HepG2 (cell line): ENCODE measurements at regions of chrX and their contacts with region 1.

Region 1: DNA sequence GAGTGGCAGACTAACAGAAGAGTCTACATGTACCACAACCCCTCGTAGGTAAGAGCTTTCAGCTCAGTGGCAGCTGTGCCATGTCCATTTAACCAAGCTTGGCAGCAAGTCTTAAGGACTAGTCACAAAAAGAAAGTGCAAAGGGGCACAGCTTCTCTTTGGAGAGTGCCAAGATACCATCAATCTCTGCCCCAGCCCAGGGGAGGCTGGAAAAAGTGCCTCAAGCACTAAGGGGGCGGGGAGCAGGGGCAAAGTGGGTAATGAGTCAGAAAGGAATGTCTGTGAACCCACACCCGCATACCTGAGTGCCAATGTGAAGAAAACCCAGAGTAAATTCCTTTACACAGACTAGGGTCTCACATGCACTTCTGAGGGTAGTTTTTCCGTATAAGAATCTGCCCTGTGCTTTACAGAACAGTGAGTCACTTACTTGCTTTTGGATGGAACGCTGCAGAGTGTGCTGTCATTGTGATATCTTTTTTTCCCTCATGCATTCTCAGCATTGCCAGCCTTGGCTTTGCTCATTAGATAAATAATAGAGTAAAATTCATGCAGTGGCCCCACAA is 219.8 kb downstream of the ZNF674 start:
- DNase-seq: peak; percentile 41
- ATAC-seq: no peak
- H3K4me3 ChIP-seq: peak overlapping the region in 1 of 3 experiments; percentile 68; a peak in 1 of 6 replicates
- H3K27ac ChIP-seq: peak overlapping the region; percentile 100
- H3K4me1 ChIP-seq: peaks cover 83% of the 10 kb centered on the region
- H3K27me3 ChIP-seq: no peaks in the 10 kb centered on the region
- CTCF ChIP-seq: no peak
- EP300 ChIP-seq: no peak
- POLR2A ChIP-seq: no peak
- RAD21 ChIP-seq: no peak

Region 2: GRCh38 chrX:46180258-46180687 is 145.1 kb before region 1 on chrX:
- CTCF ChIA-PET with region 1: no interaction called
- POLR2A ChIA-PET with region 1: no interaction called
- in situ Hi-C with region 1: no loop called
- intact Hi-C with region 1: loop called (anchors 10 kb)
- DNase-seq: peak; percentile 2
- ATAC-seq: no peak
- H3K4me3 ChIP-seq: no peak overlapping the region
- H3K27ac ChIP-seq: no peak overlapping the region
- H3K4me1 ChIP-seq: peaks cover 31% of the 10 kb centered on the region
- H3K27me3 ChIP-seq: no peaks in the 10 kb centered on the region
- CTCF ChIP-seq: no peak
- EP300 ChIP-seq: no peak
- POLR2A ChIP-seq: no peak
- RAD21 ChIP-seq: no peak

Region 3: DNA sequence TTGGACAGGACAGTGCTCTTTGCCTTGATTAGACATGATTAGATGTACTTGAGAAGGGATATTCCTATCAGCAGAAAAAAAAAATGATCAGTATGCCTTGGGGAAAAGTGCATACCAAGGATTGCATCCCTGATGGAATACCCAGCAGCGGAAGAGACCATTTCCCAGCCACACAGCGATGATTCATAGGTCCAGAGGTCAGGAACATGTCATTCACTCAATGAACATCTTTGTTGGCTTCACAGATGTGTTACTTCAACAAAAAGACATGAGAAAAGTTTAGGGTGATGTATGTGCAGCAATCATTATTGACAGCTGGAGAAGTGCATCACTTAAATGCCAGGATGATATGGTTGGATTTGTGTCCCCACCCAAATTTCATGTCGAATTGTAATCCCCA is 73.6 kb before region 1 on chrX:
- CTCF ChIA-PET with region 1: no interaction called
- POLR2A ChIA-PET with region 1: no interaction called
- in situ Hi-C with region 1: no loop called
- intact Hi-C with region 1: no loop called
- DNase-seq: peak; percentile 74
- ATAC-seq: peak; percentile 41; the same call in 2 of the 3 replicates
- H3K4me3 ChIP-seq: no peak overlapping the region
- H3K27ac ChIP-seq: no peak overlapping the region
- H3K4me1 ChIP-seq: peaks cover 36% of the 10 kb centered on the region
- H3K27me3 ChIP-seq: no peaks in the 10 kb centered on the region
- CTCF ChIP-seq: no peak
- EP300 ChIP-seq: peak in 1 of 2 experiments; percentile 36; a peak in 1 of 4 replicates
- POLR2A ChIP-seq: no peak
- RAD21 ChIP-seq: no peak

Region 4: GRCh38 chrX:46279925-46280313 is 45.5 kb before region 1 on chrX:
- CTCF ChIA-PET with region 1: no interaction called
- POLR2A ChIA-PET with region 1: no interaction called
- in situ Hi-C with region 1: no loop called
- intact Hi-C with region 1: no loop called
- DNase-seq: no peak
- ATAC-seq: no peak
- H3K4me3 ChIP-seq: no peak overlapping the region
- H3K27ac ChIP-seq: no peak overlapping the region
- H3K4me1 ChIP-seq: no peaks in the 10 kb centered on the region
- H3K27me3 ChIP-seq: no peaks in the 10 kb centered on the region
- CTCF ChIP-seq: no peak
- EP300 ChIP-seq: no peak
- POLR2A ChIP-seq: no peak
- RAD21 ChIP-seq: no peak

Region 5: GRCh38 chrX:46354481-46354880 is 29.1 kb after region 1 on chrX:
- CTCF ChIA-PET with region 1: no interaction called
- POLR2A ChIA-PET with region 1: no interaction called
- in situ Hi-C with region 1: no loop called
- intact Hi-C with region 1: no loop called
- DNase-seq: no peak
- ATAC-seq: no peak
- H3K4me3 ChIP-seq: no peak overlapping the region
- H3K27ac ChIP-seq: no peak overlapping the region
- H3K4me1 ChIP-seq: 0 out of 2 replicates have a peak, but pooled peaks cover 9% of the 10 kb centered on the region
- H3K27me3 ChIP-seq: no peaks in the 10 kb centered on the region
- CTCF ChIP-seq: no peak
- EP300 ChIP-seq: no peak
- POLR2A ChIP-seq: no peak
- RAD21 ChIP-seq: no peak